Mucosa of descending colon (tissue), 3 donors: ENCODE measurements at regions of chr6 and their contacts with region 1.

Region 1: DNA sequence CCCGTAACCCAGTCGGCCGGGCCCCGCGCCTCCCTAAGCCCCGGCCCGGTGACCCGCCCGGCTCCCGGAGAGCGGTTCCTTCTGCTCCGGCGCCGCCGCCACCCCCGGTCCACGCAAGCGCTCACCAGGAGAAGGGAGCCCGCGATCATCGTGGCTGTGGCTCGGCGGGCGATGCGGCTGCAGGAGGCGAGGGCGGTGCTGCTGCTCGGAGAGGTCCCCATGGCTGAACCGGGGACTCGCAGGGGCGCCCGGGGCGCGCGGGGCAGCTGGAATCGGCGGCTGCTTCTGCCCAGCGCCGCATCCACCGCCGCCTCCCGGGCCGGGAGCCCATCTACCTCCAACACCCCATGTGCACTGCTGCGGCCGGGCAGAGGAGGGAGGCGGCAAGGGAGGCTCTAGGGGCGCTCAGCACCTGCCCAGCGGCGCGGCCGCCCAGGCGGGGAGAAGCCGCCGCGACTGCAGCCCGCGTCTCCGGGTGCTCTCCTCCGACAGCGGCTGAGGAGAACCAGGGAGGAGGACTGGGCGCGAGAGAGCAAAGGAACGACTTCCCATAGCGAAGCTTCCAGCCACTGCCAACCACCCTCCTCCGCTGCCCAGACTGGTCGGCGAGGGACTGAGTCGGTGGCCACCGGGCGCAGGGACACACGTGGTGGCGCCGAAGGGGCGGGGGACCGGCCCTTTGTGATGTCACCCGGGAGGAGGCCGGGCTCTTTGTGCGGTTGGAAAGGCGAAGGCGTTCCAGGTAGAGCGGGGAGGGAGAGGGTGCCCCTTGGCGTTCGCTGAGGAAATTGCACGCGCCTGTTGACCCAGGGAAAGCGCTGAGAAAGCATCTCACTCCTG is at the start of gene TNFRSF21:
- DNase-seq: peak; percentile 94 to 96 (median 95)
- ATAC-seq: peak; percentile 97
- H3K4me3 ChIP-seq: peak within 1 kb of the TSS; percentile 39
- H3K4me1 ChIP-seq: peaks cover 12% of the 10 kb centered on the region
- CTCF ChIP-seq: peak; percentile 81
- total RNA-seq, gene TNFRSF21: 54.8 to 92.5 (median 75.4) TPM

Region 2: DNA sequence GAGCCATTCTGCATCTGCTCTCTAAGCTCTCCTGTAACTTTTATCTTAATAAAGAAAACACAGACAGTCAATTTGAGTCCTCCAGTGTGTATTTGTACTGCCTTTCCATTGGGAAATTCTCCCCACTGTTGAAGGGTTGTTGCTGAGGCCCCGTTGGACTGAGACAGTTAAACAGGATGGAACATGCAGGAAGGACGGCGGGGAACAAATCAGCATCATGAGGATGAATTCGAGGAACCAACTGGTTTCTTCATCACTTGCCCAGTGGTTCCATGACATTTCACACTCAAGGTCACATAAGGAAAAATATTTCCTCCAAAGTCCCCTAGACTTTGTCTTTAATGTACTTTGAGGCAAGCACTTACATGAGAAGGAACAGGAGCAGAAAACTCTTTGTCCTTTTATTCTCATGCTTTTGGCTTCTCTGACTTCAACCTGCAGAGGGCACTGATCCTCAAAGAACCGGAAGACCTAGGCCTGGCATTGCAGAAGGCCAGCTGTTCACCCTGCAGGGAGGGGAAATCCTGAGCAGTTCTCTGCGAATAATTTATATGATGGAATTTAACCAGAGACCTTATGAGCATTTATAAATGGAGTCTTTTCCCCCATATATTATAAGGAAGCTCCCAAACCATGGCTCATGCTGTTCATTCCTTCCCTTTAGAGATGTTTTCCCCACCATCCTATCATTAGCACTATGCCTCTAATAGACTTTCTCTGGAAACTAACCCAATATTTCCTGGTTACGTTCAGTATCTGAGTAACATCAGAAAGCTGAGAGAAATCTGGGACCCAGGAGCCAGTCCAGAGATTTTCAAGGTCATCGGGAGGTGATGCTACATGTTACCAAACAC is 212.2 kb before region 1 on chr6:
- intact Hi-C with region 1: loop called (anchors 5 to 10 kb)
- DNase-seq: peak in 2 of 3 donors; percentile 46 to 91
- ATAC-seq: peak; percentile 77
- H3K4me3 ChIP-seq: no peak overlapping the region
- H3K4me1 ChIP-seq: peaks cover 6% of the 10 kb centered on the region
- CTCF ChIP-seq: peak; percentile 17

Region 3: GRCh38 chr6:47405273-47405672 is 95.8 kb after region 1 on chr6:
- intact Hi-C with region 1: no loop called
- DNase-seq: peak; percentile 81 to 93 (median 82)
- ATAC-seq: peak; percentile 87
- H3K4me3 ChIP-seq: no peak overlapping the region
- H3K4me1 ChIP-seq: peaks cover 35% of the 10 kb centered on the region
- CTCF ChIP-seq: no peak